Activated CD8-positive, alpha-beta memory T cell treated with anti-CD3 and anti-CD28 coated beads, Interleukin-2, amount 10 ng/mL, durations not matched to agents 7 days and 5 days (primary cell): ENCODE measurements at regions of chr4 and their contacts with region 1.

Region 1: GRCh38 chr4:80072744-80073472 is at the start of gene ANTXR2:
- DNase-seq: peak; percentile 88
- ATAC-seq: peak; percentile 87
- H3K4me3 Mint-ChIP-seq: peak within 1 kb of the TSS; percentile 95
- H3K27ac Mint-ChIP-seq: peak within 1 kb of the TSS; percentile 89
- H3K4me1 Mint-ChIP-seq: peaks cover 72% of the 10 kb centered on the region
- H3K27me3 Mint-ChIP-seq: no peaks in the 10 kb centered on the region
- total RNA-seq, gene ANTXR2: 52.0 to 55.0 TPM

Region 2: GRCh38 chr4:80017125-80017854 is 55.6 kb before region 1 on chr4:
- CTCF ChIA-PET with region 1: no interaction called
- DNase-seq: no peak
- ATAC-seq: peak; percentile 92
- H3K4me3 Mint-ChIP-seq: no peak overlapping the region
- H3K27ac Mint-ChIP-seq: no peak overlapping the region
- H3K4me1 Mint-ChIP-seq: peaks cover 8% of the 10 kb centered on the region
- H3K27me3 Mint-ChIP-seq: no peaks in the 10 kb centered on the region

Region 3: DNA sequence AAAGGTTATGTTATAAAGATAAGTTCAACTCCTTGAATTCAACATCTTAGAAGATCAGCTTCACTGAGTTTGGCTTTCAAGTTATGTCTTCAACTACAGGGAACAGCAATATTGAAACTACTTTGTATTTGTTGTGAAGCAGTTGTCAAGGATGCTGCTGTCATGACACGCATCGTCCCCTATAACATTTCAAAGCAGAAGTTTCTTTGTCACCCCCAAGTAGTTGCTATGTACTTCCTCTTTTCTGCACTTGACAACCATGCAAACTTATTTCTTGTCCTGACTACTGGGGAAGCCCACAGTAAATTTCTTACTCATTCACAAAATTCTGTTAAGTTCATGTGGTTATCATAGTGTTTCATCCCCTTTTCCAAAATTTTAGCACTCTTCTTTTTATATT is 14.2 kb before region 1 on chr4:
- CTCF ChIA-PET with region 1: interaction called, 17 read pairs
- DNase-seq: peak; percentile 74
- ATAC-seq: peak; percentile 93
- H3K4me3 Mint-ChIP-seq: peak overlapping the region; percentile 63
- H3K27ac Mint-ChIP-seq: peak overlapping the region; percentile 97
- H3K4me1 Mint-ChIP-seq: peaks cover 57% of the 10 kb centered on the region
- H3K27me3 Mint-ChIP-seq: no peaks in the 10 kb centered on the region

Region 4: DNA sequence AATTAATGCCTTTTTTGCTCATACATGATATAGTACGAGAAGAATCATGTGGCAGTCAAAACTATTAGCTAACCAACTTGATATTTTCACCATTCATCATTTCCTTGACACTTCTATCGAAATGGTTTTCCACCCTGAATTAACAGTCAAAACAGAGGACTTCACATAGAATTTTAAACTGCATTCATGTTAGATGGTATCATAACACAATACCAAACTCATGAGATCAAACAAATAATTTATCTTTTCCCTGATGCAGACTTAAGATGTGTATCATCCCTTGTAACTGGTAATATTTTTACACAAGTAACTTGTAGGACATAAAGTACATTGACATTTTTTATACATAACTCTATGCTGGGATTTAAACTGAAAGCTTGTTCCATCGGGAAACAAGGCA is 18.3 kb after region 1 on chr4:
- CTCF ChIA-PET with region 1: no interaction called
- DNase-seq: no peak
- ATAC-seq: no peak
- H3K4me3 Mint-ChIP-seq: no peak overlapping the region
- H3K27ac Mint-ChIP-seq: no peak overlapping the region
- H3K4me1 Mint-ChIP-seq: peaks cover 18% of the 10 kb centered on the region
- H3K27me3 Mint-ChIP-seq: peaks cover 17% of the 10 kb centered on the region

Region 5: GRCh38 chr4:80125252-80126177 is 52.6 kb after region 1 on chr4:
- CTCF ChIA-PET with region 1: interaction called, 17 read pairs
- DNase-seq: peak; percentile 67
- ATAC-seq: peak; percentile 83
- H3K4me3 Mint-ChIP-seq: peak overlapping the region; percentile 33
- H3K27ac Mint-ChIP-seq: peak overlapping the region; percentile 95
- H3K4me1 Mint-ChIP-seq: peaks cover 66% of the 10 kb centered on the region
- H3K27me3 Mint-ChIP-seq: no peaks in the 10 kb centered on the region

Region 6: GRCh38 chr4:80173401-80173800 is 100.5 kb after region 1 on chr4:
- CTCF ChIA-PET with region 1: interaction called, 11 read pairs
- DNase-seq: peak; percentile 83
- ATAC-seq: peak; percentile 90
- H3K4me3 Mint-ChIP-seq: peak overlapping the region; percentile 26
- H3K27ac Mint-ChIP-seq: peak overlapping the region; percentile 94
- H3K4me1 Mint-ChIP-seq: peaks cover 56% of the 10 kb centered on the region
- H3K27me3 Mint-ChIP-seq: no peaks in the 10 kb centered on the region